Right cardiac atrium (tissue), 5 donors: ENCODE measurements at regions of chr6 and their contacts with region 1.

Region 1: DNA sequence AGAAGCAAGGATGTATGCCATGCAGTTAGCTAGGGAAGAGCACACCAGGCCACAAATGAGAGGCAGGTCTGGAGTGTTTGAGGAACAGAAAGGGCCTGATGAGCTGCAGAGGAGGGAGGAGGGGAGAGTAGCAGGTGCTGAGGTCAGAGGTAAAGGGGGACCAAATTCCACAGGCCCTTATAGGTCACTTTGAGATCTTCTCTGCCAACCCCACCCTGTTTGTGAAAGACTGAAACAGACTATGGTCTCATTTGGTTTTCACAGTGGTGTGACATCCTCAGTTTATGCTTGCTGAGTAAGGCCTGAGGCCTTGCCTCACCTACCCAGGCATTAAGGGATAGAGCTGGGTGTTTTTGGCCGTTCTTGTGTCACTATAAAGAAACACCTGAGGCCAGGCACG is 187.7 kb upstream of the MYLIP start:
- DNase-seq: no peak
- ATAC-seq: no peak
- H3K4me3 ChIP-seq: no peak overlapping the region
- H3K27ac ChIP-seq: no peak overlapping the region
- H3K4me1 ChIP-seq: no peaks in the 10 kb centered on the region
- H3K27me3 ChIP-seq: no peaks in the 10 kb centered on the region

Region 2: GRCh38 chr6:16128759-16129622 is 187.8 kb after region 1 on chr6 and contains the start of gene MYLIP:
- intact Hi-C with region 1: loop called in 1 of 4 experiments (anchors 5 kb)
- DNase-seq: peak; percentile 97 to 99 (median 99)
- ATAC-seq: peak; percentile 99
- H3K4me3 ChIP-seq: peak within 1 kb of the TSS; percentile 88
- H3K27ac ChIP-seq: peak within 1 kb of the TSS; percentile 95
- H3K4me1 ChIP-seq: peaks cover 2% of the 10 kb centered on the region
- H3K27me3 ChIP-seq: no peaks in the 10 kb centered on the region
- total RNA-seq, gene MYLIP: 12.6 to 25.9 (median 22.2) TPM

Region 3: DNA sequence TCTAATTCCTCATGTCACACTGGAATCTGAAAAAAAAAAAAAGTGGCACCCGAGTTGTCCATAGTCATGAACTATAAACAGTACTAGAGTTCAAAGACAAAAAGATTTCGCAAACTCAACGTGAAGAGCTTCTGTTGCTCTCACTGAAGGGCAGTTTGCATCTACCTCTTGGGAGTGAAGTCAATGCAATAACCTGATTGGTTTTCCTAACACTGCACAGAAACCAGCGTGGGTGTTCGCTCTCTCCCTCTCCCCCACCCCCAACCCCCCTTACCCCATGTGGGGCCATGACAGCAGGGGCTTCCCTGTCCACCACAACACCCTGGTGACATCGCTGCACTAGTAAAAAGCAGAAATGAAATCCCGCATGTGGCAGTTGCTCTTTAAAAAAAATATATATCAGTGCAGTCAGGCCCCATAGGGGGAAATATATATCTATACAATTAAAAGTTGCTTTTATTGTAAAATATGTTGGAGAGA is 364.1 kb after region 1 on chr6:
- intact Hi-C with region 1: no loop called
- DNase-seq: no peak
- ATAC-seq: no peak
- H3K4me3 ChIP-seq: no peak overlapping the region
- H3K27ac ChIP-seq: no peak overlapping the region
- H3K4me1 ChIP-seq: no peaks in the 10 kb centered on the region
- H3K27me3 ChIP-seq: no peaks in the 10 kb centered on the region